Natural killer cell (primary cell): ENCODE measurements at regions of chr16 and their contacts with region 1.

Region 1: DNA sequence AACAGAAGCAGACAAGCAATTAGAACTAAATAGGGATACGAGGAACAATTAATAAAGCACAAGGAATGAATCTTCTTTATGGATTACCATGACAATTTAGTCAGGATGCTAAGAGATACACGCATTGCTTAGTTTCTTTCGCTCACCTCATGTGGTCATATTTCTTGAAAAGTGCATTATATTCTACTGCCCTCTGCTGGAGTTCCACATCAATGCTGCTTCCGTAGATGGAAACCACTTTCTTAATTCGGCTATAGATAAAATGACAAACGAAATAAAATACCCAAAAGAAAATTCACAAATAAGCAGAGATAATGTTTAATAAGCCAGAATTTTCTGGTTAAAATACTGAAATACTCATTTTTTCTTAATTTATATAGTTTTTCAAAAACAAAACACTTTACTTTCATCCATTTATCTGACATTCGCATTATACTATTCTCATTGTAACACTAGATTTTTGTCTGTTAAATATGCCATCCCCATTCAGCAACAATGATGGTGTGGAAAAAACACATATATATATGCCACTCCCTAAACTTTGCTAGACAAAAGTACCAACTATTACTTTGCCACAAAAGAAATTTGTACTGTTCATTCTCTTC is 22.0 kb upstream of the PHLPP2 start:
- DNase-seq: peak in 1 of 2 donors; percentile 74
- ATAC-seq: peak; percentile 57 to 75 (median 60)
- H3K4me3 ChIP-seq: no peak overlapping the region
- H3K4me3 Mint-ChIP-seq: no peak overlapping the region
- H3K27ac ChIP-seq: no peak overlapping the region
- H3K27ac Mint-ChIP-seq: no peak overlapping the region
- H3K4me1 ChIP-seq: no peaks in the 10 kb centered on the region
- H3K4me1 Mint-ChIP-seq: peaks cover 0 to 5% of the 10 kb centered on the region in 2 donors
- H3K27me3 ChIP-seq: no peaks in the 10 kb centered on the region
- H3K27me3 Mint-ChIP-seq: no peaks in the 10 kb centered on the region
- CTCF ChIP-seq: peak; percentile 77

Region 2: GRCh38 chr16:71311553-71312158 is 434.9 kb before region 1 on chr16:
- intact Hi-C with region 1: no loop called
- DNase-seq: peak in 1 of 2 donors; percentile 66
- ATAC-seq: peak; percentile 44 to 67 (median 52)
- H3K4me3 ChIP-seq: no peak overlapping the region
- H3K4me3 Mint-ChIP-seq: no peak overlapping the region
- H3K27ac ChIP-seq: no peak overlapping the region
- H3K27ac Mint-ChIP-seq: no peak overlapping the region
- H3K4me1 ChIP-seq: no peaks in the 10 kb centered on the region
- H3K4me1 Mint-ChIP-seq: peaks cover 8 to 9% of the 10 kb centered on the region in 2 donors
- H3K27me3 ChIP-seq: peaks cover 7% of the 10 kb centered on the region
- H3K27me3 Mint-ChIP-seq: peaks cover 42 to 72% of the 10 kb centered on the region in 2 donors
- CTCF ChIP-seq: peak; percentile 80

Region 3: DNA sequence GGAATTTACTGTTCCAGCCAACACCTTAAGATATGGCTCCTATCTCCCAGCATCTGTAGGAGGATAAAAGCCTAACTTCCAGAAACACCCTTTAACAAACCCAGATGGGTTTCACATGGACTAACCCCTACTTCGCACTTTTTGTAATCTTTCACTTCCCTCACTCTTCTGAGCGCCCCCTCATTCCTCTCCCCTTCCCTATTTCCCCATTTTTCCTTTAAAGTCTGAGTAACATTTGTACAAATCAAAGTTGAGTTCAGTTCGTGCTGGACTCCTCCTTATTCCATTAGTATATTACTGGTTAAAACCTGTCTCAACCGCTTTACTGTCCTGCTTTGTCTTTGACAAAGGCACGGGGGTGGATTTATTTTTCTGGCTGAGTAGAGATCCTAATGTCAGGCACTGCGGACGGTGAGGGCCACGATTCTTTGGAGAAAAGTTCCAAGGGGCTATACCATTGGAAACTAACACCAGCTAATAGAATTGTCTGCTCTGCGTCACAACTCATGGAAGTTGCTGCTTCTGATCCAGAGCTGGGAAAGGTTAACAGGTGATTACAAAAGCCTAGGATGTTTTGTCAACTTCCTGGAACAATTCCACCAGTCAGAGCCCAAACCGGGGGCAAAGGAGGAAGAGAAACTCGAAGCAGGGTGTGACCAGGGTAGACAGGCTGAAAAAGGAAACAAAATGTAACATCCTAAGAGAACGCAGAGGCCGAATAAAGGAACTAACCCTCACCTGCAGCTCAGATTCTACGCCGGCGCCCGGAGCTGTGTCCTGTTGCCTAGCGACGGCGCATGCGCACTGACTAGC is 182.2 kb before region 1 on chr16:
- intact Hi-C with region 1: loop called (anchors 10 kb)
- DNase-seq: no peak
- ATAC-seq: no peak
- H3K4me3 ChIP-seq: peak overlapping the region; percentile 62
- H3K4me3 Mint-ChIP-seq: peak overlapping the region; percentile 94
- H3K27ac ChIP-seq: peak overlapping the region; percentile 89
- H3K27ac Mint-ChIP-seq: peak overlapping the region; percentile 94 to 95
- H3K4me1 ChIP-seq: peaks cover 14% of the 10 kb centered on the region
- H3K4me1 Mint-ChIP-seq: peaks cover 19 to 20% of the 10 kb centered on the region in 2 donors
- H3K27me3 ChIP-seq: peaks cover 2% of the 10 kb centered on the region
- H3K27me3 Mint-ChIP-seq: peaks cover 5 to 15% of the 10 kb centered on the region in 2 donors
- CTCF ChIP-seq: no peak

Region 4: GRCh38 chr16:71961066-71962039 is 214.8 kb after region 1 on chr16:
- intact Hi-C with region 1: loop called (anchors 1 kb)
- DNase-seq: peak; percentile 71 to 88
- ATAC-seq: peak; percentile 81 to 97 (median 94)
- H3K4me3 ChIP-seq: no peak overlapping the region
- H3K4me3 Mint-ChIP-seq: no peak overlapping the region
- H3K27ac ChIP-seq: no peak overlapping the region
- H3K27ac Mint-ChIP-seq: no peak overlapping the region
- H3K4me1 ChIP-seq: peaks cover under 1% of the 10 kb centered on the region
- H3K4me1 Mint-ChIP-seq: peaks cover 3 to 4% of the 10 kb centered on the region in 2 donors
- H3K27me3 ChIP-seq: no peaks in the 10 kb centered on the region
- H3K27me3 Mint-ChIP-seq: peaks cover 3 to 8% of the 10 kb centered on the region in 2 donors
- CTCF ChIP-seq: peak; percentile 77